Colonic mucosa (tissue), 4 donors: ENCODE measurements at regions of chr13 and their contacts with region 1.

Region 1: DNA sequence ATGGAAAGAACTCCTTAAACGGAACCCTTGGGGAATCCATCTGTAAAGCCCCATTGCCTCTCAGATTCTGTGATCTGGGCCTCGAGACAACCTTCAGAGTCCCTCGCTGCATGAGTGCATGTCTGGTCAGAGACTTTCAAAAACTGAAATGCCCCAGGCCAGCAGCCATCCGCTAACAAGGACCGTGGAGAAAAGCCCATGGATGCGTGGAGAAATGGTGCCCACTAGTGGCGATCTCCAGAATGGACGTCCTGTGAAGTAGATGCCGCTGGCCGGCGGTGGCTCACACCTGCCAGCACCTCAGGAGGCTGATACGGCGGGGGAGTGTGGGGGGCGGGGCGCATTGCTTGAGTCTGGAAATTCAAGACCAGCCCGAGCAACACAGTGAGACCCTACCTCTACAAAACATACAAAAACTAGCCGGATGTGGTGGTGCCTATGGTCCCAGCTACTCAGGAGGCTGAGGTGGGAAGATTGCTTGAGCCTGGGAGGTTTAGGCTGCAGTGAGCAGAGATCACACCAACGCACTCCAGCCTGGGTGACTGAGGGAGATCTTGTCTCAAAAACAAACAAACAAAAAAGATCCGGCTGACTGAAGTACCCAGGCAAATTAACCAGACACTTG is 7.9 kb upstream of the CDC16 start:
- DNase-seq: peak; percentile 87
- H3K4me3 ChIP-seq: no peak overlapping the region
- H3K27ac ChIP-seq: no peak overlapping the region
- H3K4me1 ChIP-seq: no peaks in the 10 kb centered on the region
- H3K27me3 ChIP-seq: no peaks in the 10 kb centered on the region
- CTCF ChIP-seq: peak; percentile 87

Region 2: GRCh38 chr13:113951246-113951999 is 275.4 kb before region 1 on chr13:
- intact Hi-C with region 1: loop called (anchors 1 kb)
- DNase-seq: peak; percentile 85
- H3K4me3 ChIP-seq: no peak overlapping the region
- H3K27ac ChIP-seq: no peak overlapping the region
- H3K4me1 ChIP-seq: peaks cover 3% of the 10 kb centered on the region
- H3K27me3 ChIP-seq: no peaks in the 10 kb centered on the region
- CTCF ChIP-seq: peak; percentile 63

Region 3: DNA sequence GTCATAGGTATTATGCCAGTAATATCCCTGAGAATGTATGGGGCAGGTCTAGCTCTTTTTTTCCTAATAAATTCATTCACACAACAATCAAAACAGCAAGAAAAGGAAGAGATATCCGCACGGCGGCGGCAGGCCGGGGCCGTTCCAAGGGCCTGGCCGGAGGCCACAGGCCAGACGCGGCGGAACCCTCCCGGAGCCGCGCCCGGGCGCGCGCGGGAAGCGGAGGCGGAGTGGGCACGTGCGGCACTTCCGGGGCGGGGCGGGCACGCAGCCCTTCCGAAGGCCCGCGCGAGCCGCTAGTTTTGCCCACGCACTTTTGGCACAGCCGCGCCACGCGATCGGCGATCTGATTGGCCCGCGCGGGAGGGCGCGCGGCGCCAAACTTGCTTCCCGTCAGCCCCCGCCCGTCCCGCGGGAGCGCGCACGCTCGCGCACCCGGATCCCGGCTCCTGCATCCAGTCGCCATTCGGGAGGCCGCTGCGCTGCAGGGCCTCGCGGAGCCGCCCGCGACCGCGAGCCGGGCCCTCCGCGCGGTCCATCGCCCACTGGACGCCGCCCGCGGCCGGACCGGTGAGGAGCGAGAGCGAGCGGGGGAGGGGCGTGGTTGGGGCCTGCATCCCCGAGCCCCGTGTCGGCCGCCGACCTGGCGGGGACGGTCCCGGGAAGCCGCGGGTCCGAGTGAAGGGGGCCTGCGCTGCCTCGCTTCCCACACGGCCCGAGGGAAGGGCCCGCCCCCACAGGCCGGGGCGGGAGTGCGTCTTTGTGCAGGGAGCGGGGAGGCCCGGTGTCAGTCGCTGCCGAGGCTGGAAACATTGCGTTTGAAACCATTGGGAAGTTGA is 87.5 kb after region 1 on chr13 and contains the start of gene CHAMP1:
- intact Hi-C with region 1: no loop called
- DNase-seq: peak; percentile 95
- H3K4me3 ChIP-seq: peak within 1 kb of the TSS; percentile 83
- H3K27ac ChIP-seq: peak within 1 kb of the TSS; percentile 95
- H3K4me1 ChIP-seq: no peaks in the 10 kb centered on the region
- H3K27me3 ChIP-seq: no peaks in the 10 kb centered on the region
- CTCF ChIP-seq: no peak
- total RNA-seq, gene CHAMP1: 13.1 to 19.2 TPM